ENCODE measurements at regions of chr6 and their contacts with region 1.

Region 1: DNA sequence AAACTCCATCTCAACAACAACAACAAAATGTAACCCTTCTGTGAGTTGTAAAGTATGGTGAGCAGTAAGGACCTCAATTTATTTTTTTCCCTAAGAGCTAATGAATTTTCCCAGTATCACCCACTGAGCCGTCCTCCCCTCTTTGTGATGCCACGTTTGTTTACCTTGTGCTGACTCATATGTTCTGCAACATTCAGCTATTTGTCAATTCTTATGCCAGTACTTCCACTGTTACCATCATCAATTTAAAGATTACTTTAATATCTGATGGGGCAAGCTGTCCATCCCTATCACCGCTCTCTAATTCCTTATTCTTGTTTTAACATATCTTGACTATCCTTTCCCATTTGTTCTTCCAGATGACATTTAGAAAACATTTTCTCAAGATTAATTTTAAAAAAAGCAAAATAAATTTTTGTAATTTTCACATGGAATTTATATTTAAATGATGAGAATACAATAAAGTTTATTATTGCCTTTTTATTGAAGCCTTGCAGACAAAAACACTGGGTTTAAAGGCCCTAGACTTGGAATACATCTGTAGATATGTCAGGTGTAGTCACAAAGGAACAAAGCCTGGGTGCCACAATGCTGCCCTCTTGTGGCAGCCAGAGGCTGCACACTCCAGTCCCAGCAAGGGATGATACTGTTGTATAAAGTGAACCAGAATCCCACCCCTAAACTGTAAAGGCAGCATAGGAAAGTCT is 37.4 kb downstream of the MAK start:
- DNase-seq: peak; percentile 27
- H3K4me3 ChIP-seq: no peak overlapping the region
- H3K27ac ChIP-seq: no peak overlapping the region
- H3K4me1 ChIP-seq: no peaks in the 10 kb centered on the region
- H3K27me3 ChIP-seq: no peaks in the 10 kb centered on the region
- CTCF ChIP-seq: peak; percentile 100

Region 2: DNA sequence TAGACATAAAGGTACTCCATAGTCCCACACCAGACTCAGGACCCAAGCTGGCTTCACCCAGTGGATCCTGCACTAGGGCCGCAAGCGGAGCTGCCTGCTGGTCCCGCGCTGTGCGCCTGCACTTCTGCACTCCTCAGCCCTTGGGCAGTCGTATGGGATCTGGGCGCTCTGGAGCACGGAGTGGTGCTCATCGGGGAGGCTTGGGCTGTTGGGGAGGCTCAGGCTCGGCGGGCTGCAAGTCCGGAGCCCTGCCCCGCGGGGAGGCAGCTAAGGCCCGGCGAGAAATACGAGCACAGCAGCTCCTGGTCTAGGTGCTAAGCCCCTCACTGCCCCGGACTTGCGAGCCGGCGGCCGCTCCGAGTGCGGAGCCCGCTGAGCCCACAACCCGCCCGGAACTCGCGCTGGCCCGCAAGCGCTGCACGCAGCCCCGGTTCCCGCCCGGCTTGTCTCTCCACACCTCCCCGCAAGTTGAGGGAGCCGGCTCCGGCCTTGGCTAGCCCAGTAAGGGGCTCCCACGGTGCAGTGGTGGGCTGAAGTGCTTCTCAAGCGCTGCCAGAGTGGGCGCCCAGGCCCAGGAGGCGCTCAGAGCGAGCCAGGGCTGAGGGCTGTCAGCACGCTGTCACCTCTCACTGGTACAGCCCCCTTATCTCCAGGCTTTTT is 313.2 kb before region 1 on chr6:
- intact Hi-C with region 1: loop called (anchors 10 kb)
- DNase-seq: no peak
- H3K4me3 ChIP-seq: no peak overlapping the region
- H3K27ac ChIP-seq: no peak overlapping the region
- H3K4me1 ChIP-seq: no peaks in the 10 kb centered on the region
- H3K27me3 ChIP-seq: peaks cover 23% of the 10 kb centered on the region
- CTCF ChIP-seq: no peak

Measured in left ventricle myocardium inferior (tissue), 1 donor.